ENCODE measurements at regions of chr9 and their contacts with region 1.

Region 1: GRCh38 chr9:122464633-122465567 is 12.8 kb downstream of the OR1J1 start:
- DNase-seq: peak; percentile 51 to 82 (median 64)
- ATAC-seq: peak; percentile 92
- H3K4me3 ChIP-seq: peak overlapping the region; percentile 28
- H3K27ac ChIP-seq: no peak overlapping the region
- H3K4me1 ChIP-seq: peaks cover 0 to 3% of the 10 kb centered on the region in 2 experiments; a peak in 1 of 5 replicates
- H3K27me3 ChIP-seq: no peaks in the 10 kb centered on the region; a peak in 1 of 5 replicates
- CTCF ChIP-seq: peak; percentile 73 to 92 (median 78)
- EP300 ChIP-seq: no peak
- POLR2A ChIP-seq: no peak
- RAD21 ChIP-seq: peak; percentile 87 to 88

Region 2: DNA sequence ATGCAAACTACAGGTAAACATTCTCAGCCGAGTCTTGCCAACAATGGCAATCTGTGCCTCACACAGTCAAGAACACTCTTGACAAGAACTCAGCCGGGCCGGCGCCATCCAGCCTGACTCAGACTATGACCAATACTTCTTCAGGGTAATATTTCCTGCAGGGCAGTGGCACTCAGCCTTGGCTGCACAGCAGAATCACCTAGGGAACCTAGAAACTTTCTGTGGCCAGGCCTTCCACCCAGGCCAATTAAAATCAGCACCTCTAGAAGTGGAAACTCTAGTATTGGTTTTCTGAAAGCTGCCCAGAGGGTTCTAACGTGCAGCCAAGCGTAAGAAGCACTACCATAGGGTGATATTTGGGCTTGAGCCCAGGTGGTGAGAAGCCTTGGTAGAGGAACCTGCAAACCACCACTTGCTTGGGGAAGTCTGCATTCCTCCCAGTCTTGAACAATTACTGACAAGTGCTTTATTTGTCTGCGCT is 492.4 kb before region 1 on chr9:
- CTCF ChIA-PET with region 1: no interaction called
- POLR2A ChIA-PET with region 1: no interaction called
- in situ Hi-C with region 1: no loop called
- intact Hi-C with region 1: no loop called
- DNase-seq: no peak
- ATAC-seq: no peak
- H3K4me3 ChIP-seq: no peak overlapping the region
- H3K27ac ChIP-seq: no peak overlapping the region
- H3K4me1 ChIP-seq: no peaks in the 10 kb centered on the region
- H3K27me3 ChIP-seq: peaks cover 4 to 6% of the 10 kb centered on the region in 2 experiments; a peak in 2 of 5 replicates
- CTCF ChIP-seq: no peak
- EP300 ChIP-seq: no peak
- POLR2A ChIP-seq: no peak
- RAD21 ChIP-seq: no peak

Region 3: GRCh38 chr9:122609806-122610205 is 144.9 kb after region 1 on chr9:
- CTCF ChIA-PET with region 1: no interaction called
- POLR2A ChIA-PET with region 1: no interaction called
- in situ Hi-C with region 1: no loop called
- intact Hi-C with region 1: loop called (anchors 5 kb)
- DNase-seq: peak in 1 of 4 experiments; percentile 8
- ATAC-seq: no peak
- H3K4me3 ChIP-seq: no peak overlapping the region
- H3K27ac ChIP-seq: no peak overlapping the region
- H3K4me1 ChIP-seq: no peaks in the 10 kb centered on the region
- H3K27me3 ChIP-seq: peaks cover 0 to 13% of the 10 kb centered on the region in 2 experiments; a peak in 3 of 5 replicates
- CTCF ChIP-seq: no peak
- EP300 ChIP-seq: no peak
- POLR2A ChIP-seq: no peak
- RAD21 ChIP-seq: no peak

Region 4: GRCh38 chr9:122991370-122991830 is 526.5 kb after region 1 on chr9:
- CTCF ChIA-PET with region 1: interaction called, 9 read pairs
- POLR2A ChIA-PET with region 1: no interaction called
- in situ Hi-C with region 1: loop called (anchors 10 kb)
- intact Hi-C with region 1: loop called (anchors 1 kb)
- DNase-seq: peak; percentile 34 to 60 (median 54)
- ATAC-seq: peak; percentile 79
- H3K4me3 ChIP-seq: no peak overlapping the region
- H3K27ac ChIP-seq: no peak overlapping the region
- H3K4me1 ChIP-seq: no peaks in the 10 kb centered on the region; a peak in 1 of 5 replicates
- H3K27me3 ChIP-seq: no peaks in the 10 kb centered on the region
- CTCF ChIP-seq: peak; percentile 31 to 80 (median 52); a peak in 5 of 6 replicates
- EP300 ChIP-seq: no peak
- POLR2A ChIP-seq: no peak
- RAD21 ChIP-seq: peak; percentile 57 to 76

Region 5: DNA sequence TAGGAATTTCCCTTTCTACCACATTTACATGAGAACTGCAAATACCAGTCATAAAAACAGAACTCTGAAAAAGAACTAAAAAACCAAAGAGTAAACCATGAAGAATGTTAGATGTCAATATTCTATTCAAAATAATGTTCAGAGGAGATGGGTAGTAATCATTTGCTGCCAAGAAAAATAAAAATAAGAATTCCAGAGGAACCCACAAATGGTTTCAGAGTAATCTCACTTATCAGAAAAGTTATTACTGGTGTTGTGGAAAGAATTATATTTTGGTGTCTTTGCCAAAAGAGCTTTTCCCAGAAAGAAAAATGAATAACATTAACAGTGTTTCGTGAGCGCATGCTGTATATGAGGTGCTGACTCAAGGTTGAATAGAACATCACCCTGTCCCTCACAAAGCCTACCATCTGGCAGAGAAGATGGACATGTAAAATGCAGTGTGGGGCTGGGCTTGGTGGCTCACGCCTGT is 604.1 kb after region 1 on chr9:
- CTCF ChIA-PET with region 1: no interaction called
- POLR2A ChIA-PET with region 1: no interaction called
- in situ Hi-C with region 1: no loop called
- intact Hi-C with region 1: loop called (anchors 10 kb)
- DNase-seq: no peak
- ATAC-seq: no peak
- H3K4me3 ChIP-seq: no peak overlapping the region
- H3K27ac ChIP-seq: no peak overlapping the region
- H3K4me1 ChIP-seq: no peaks in the 10 kb centered on the region
- H3K27me3 ChIP-seq: no peaks in the 10 kb centered on the region
- CTCF ChIP-seq: no peak
- EP300 ChIP-seq: no peak
- POLR2A ChIP-seq: no peak
- RAD21 ChIP-seq: no peak